PC-3 (cell line): ENCODE measurements at regions of chr5 and their contacts with region 1.

Region 1: GRCh38 chr5:127959152-127959764 is 124.3 kb upstream of the SLC12A2 start:
- DNase-seq: peak; percentile 94
- ATAC-seq: peak; percentile 36
- H3K4me3 ChIP-seq: no peak overlapping the region; the same call in 1 of the 2 replicates
- H3K27ac ChIP-seq: peak overlapping the region; percentile 90
- H3K4me1 ChIP-seq: peaks cover 39% of the 10 kb centered on the region
- H3K27me3 ChIP-seq: no peaks in the 10 kb centered on the region
- CTCF ChIP-seq: no peak

Region 2: DNA sequence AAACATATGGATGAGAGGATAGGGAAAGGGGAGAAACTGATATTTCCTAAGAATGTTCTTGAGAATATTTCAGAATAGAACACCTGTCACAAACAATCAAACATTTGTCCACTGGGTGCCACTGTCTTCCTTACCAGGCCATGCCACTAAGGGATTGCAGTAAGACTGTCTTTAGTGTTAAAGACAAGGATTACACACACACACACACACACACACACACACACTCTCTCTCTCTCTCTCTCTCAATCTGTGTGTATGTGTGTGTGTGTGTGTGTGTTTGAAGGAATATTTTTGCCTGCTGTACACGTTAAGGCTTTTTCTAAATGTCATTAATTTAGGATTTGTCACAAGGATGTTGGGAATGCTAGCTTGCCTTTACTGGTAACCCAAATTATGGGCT is 201.7 kb before region 1 on chr5:
- CTCF ChIA-PET with region 1: no interaction called
- POLR2A ChIA-PET with region 1: no interaction called
- intact Hi-C with region 1: loop called (anchors 2 kb)
- DNase-seq: peak; percentile 78
- ATAC-seq: peak; percentile 81
- H3K4me3 ChIP-seq: no peak overlapping the region
- H3K27ac ChIP-seq: no peak overlapping the region
- H3K4me1 ChIP-seq: peaks cover 6% of the 10 kb centered on the region
- H3K27me3 ChIP-seq: no peaks in the 10 kb centered on the region
- CTCF ChIP-seq: peak; percentile 84

Region 3: DNA sequence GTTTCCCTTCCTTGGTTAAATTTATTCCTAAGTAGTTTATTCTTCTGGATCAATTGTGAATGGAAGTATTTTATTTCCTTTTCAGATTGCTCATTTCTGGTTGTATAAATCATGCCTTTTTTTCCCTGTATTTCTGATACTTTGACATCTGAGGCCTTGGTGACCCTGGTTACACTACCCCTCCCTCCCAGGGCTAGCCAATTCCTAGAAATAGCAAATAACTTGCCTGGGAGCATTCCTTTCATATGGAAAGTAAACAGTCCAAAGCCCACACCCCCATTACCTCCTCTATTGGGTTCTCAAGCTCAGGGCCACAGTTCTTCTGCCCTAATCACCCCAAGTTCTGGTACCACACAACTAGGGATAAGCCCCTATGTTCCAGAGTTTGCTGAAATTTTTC is 184.3 kb before region 1 on chr5:
- CTCF ChIA-PET with region 1: no interaction called
- POLR2A ChIA-PET with region 1: no interaction called
- intact Hi-C with region 1: no loop called
- DNase-seq: no peak
- ATAC-seq: no peak
- H3K4me3 ChIP-seq: no peak overlapping the region
- H3K27ac ChIP-seq: no peak overlapping the region
- H3K4me1 ChIP-seq: no peaks in the 10 kb centered on the region
- H3K27me3 ChIP-seq: no peaks in the 10 kb centered on the region
- CTCF ChIP-seq: no peak

Region 4: DNA sequence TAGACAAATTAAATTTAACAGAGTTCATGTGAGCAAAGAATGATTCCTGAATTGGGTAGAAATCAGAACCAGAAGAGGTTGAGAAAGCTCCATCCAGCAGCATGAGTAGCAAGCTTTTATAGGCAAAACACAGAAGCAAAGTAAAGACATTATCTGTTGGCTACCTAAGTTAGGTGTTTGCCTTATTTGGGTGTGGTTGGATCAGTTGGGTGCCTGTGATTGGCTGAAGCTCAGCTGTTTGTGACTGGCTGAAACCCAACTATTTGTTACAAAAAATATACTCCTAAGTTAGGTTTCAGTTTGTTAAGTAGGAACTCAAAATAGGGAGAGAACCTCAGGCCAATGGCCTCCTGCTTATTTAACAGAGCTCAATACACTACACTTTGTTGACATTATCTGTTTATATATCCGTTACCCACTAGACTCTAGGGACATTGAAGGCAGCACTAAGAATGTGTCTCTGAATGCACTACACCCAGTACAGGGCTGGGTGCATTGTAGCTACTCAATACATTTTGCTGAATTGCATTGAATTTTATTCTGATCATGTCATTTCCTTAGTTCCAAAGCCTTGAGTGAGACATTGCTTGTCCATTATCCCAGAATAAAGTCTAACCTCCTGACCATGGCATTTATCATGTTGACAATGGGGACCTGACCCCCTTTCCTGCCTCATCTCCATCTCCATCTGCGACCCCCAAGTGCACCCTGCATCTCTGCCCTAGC is 157.3 kb before region 1 on chr5:
- CTCF ChIA-PET with region 1: no interaction called
- POLR2A ChIA-PET with region 1: no interaction called
- intact Hi-C with region 1: no loop called
- DNase-seq: peak; percentile 27
- ATAC-seq: peak; percentile 75
- H3K4me3 ChIP-seq: no peak overlapping the region
- H3K27ac ChIP-seq: no peak overlapping the region
- H3K4me1 ChIP-seq: peaks cover 7% of the 10 kb centered on the region; the same call in 1 of the 2 replicates
- H3K27me3 ChIP-seq: no peaks in the 10 kb centered on the region
- CTCF ChIP-seq: no peak

Region 5: DNA sequence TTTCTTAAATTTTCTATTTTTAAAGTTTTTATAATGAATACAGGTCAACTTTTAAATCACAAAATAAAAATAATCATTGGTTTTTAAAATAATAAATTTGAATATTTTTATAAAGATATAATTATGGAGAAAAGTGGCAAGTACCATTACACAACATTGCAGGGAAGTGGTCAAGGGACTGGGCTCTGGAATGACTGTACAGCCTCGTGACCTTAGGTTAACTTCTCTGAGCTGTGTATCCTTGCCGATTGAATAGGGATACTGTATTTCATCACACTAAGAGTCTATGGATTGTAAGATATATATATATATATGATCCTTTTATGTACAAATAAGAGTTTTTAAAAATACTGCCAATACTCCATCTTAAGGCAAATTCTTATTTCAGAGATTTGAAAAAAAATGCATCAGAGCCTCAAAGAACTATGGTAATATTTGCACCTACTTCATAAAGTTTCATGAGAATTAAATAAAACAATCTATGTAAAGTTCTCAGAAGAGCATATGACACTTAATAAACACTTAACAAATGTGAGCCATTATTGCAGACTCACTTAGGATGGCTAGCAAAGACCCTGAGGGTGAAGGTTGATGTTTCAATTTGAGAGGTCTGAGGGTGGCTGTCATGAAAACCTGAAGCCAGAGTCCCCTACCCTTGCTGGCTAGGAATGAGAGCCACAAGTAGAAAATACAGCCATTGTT is 119.6 kb before region 1 on chr5:
- CTCF ChIA-PET with region 1: no interaction called
- POLR2A ChIA-PET with region 1: no interaction called
- intact Hi-C with region 1: loop called (anchors 1 kb)
- DNase-seq: no peak
- ATAC-seq: no peak
- H3K4me3 ChIP-seq: no peak overlapping the region
- H3K27ac ChIP-seq: peak overlapping the region; percentile 31; the same call in 1 of the 2 replicates
- H3K4me1 ChIP-seq: peaks cover 23% of the 10 kb centered on the region
- H3K27me3 ChIP-seq: no peaks in the 10 kb centered on the region
- CTCF ChIP-seq: no peak

Region 6: DNA sequence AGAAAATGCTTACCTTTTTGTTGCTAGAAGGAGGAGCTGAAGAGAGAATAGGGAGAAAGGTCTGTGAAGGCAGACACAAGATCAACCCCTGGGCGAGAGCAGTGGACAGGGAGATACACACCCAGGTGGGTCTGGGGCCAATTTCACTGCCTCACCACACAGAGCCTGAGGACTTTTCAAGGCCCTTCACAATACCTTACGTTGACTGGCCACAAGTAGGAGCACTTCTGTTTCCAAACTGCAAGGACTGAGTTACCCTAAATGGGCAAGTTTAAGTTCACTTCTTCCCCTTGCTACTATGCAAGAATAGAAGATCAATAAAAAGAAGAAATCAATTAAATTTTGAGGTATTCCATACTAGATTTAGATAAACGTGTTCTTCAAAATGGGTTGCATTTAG is 50.2 kb before region 1 on chr5:
- CTCF ChIA-PET with region 1: no interaction called
- POLR2A ChIA-PET with region 1: no interaction called
- intact Hi-C with region 1: loop called (anchors 1 kb)
- DNase-seq: peak; percentile 78
- ATAC-seq: peak; percentile 73
- H3K4me3 ChIP-seq: no peak overlapping the region
- H3K27ac ChIP-seq: no peak overlapping the region
- H3K4me1 ChIP-seq: peaks cover 8% of the 10 kb centered on the region
- H3K27me3 ChIP-seq: no peaks in the 10 kb centered on the region
- CTCF ChIP-seq: peak; percentile 89

Region 7: DNA sequence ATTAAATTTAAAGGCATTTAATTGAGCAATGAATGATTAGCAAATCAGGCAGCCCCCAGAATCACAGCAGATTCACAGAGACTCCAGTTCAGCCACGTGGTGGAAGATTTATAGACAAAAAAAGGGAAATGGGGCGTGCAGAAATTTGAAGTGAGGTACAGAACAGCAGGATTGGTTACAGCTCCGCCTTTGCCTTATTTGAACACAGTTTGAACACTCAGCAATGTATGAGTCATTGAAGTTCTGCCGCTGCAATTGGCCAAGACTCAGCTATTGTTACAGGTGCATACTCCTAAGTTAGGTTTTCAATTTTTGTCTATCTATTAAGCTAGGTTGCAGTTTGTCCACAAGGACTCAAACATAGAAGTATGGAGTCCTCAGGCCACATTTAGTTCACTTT is 33.3 kb before region 1 on chr5:
- CTCF ChIA-PET with region 1: no interaction called
- POLR2A ChIA-PET with region 1: no interaction called
- intact Hi-C with region 1: no loop called
- DNase-seq: peak; percentile 62
- ATAC-seq: peak; percentile 74
- H3K4me3 ChIP-seq: no peak overlapping the region
- H3K27ac ChIP-seq: no peak overlapping the region
- H3K4me1 ChIP-seq: peaks cover 29% of the 10 kb centered on the region
- H3K27me3 ChIP-seq: no peaks in the 10 kb centered on the region
- CTCF ChIP-seq: no peak

Region 8: DNA sequence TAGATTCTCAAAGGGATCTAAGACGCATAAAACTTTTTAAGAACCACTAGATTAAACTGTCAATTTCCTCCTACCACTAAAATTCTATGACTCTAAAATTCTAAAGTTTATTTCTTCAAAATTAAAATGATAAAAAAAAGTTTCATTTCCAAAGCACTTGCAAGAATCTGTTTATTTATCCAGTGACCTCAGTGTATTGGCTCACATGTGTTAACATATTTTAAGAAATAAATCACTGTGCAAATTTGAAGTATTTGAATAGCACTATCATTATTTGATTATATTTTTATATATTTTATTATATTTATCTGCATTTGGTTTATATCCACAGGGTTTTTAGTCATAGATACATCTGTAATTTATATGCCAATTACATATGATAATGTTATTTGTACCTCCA is 62.2 kb after region 1 on chr5:
- CTCF ChIA-PET with region 1: no interaction called
- POLR2A ChIA-PET with region 1: no interaction called
- intact Hi-C with region 1: loop called (anchors 5 kb)
- DNase-seq: no peak
- ATAC-seq: peak; percentile 70
- H3K4me3 ChIP-seq: no peak overlapping the region
- H3K27ac ChIP-seq: no peak overlapping the region
- H3K4me1 ChIP-seq: no peaks in the 10 kb centered on the region
- H3K27me3 ChIP-seq: no peaks in the 10 kb centered on the region
- CTCF ChIP-seq: no peak

Region 9: GRCh38 chr5:128083033-128083810 is 124.0 kb after region 1 on chr5 and contains the start of gene SLC12A2:
- CTCF ChIA-PET with region 1: interaction called, 3 read pairs
- POLR2A ChIA-PET with region 1: interaction called, 4 read pairs
- intact Hi-C with region 1: loop called (anchors 1 kb)
- DNase-seq: peak; percentile 92
- ATAC-seq: peak; percentile 63
- H3K4me3 ChIP-seq: peak within 1 kb of the TSS; percentile 89
- H3K27ac ChIP-seq: peak within 1 kb of the TSS; percentile 84
- H3K4me1 ChIP-seq: peaks cover 42% of the 10 kb centered on the region
- H3K27me3 ChIP-seq: no peaks in the 10 kb centered on the region
- CTCF ChIP-seq: no peak
- total RNA-seq, gene SLC12A2: 33.9 and 42.3 TPM in 2 replicates

Region 10: GRCh38 chr5:128174951-128175350 is 215.7 kb after region 1 on chr5:
- CTCF ChIA-PET with region 1: no interaction called
- POLR2A ChIA-PET with region 1: no interaction called
- intact Hi-C with region 1: no loop called
- DNase-seq: no peak
- ATAC-seq: no peak
- H3K4me3 ChIP-seq: no peak overlapping the region
- H3K27ac ChIP-seq: no peak overlapping the region
- H3K4me1 ChIP-seq: no peaks in the 10 kb centered on the region
- H3K27me3 ChIP-seq: no peaks in the 10 kb centered on the region
- CTCF ChIP-seq: no peak